ENCODE measurements at regions of chr5 and their contacts with region 1.

Region 1: GRCh38 chr5:97135868-97136267 is 6.5 kb downstream of the LIX1 start:
- DNase-seq: peak; percentile 31
- H3K4me3 Mint-ChIP-seq: no peak overlapping the region
- H3K27ac Mint-ChIP-seq: no peak overlapping the region
- H3K4me1 Mint-ChIP-seq: peaks cover 3% of the 10 kb centered on the region
- H3K27me3 Mint-ChIP-seq: no peaks in the 10 kb centered on the region

Region 2: DNA sequence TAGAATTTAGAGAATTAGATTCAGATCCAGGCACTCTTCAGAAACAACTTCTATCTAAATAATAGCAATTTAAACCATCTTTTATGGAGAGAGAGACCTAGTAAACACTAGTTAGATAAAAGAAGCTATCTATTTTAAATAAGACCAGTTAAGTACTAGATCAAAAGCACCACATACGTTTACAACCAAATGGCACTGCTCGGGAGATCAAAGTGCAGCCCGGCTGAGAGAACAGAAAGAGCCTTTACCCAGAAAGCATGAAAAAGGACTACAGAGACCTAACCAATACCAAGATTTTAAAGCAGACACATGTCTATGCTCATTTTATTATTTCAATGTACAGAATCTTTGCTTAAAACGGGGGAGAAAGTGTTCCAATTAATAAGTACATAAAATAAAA is 24.3 kb before region 1 on chr5:
- CTCF ChIA-PET with region 1: no interaction called
- POLR2A ChIA-PET with region 1: no interaction called
- intact Hi-C with region 1: loop called (anchors 2 kb)
- DNase-seq: no peak
- H3K4me3 Mint-ChIP-seq: no peak overlapping the region
- H3K27ac Mint-ChIP-seq: no peak overlapping the region
- H3K4me1 Mint-ChIP-seq: no peaks in the 10 kb centered on the region
- H3K27me3 Mint-ChIP-seq: peaks cover 2% of the 10 kb centered on the region